ENCODE measurements at regions of chr1 and their contacts with region 1.

Region 1: DNA sequence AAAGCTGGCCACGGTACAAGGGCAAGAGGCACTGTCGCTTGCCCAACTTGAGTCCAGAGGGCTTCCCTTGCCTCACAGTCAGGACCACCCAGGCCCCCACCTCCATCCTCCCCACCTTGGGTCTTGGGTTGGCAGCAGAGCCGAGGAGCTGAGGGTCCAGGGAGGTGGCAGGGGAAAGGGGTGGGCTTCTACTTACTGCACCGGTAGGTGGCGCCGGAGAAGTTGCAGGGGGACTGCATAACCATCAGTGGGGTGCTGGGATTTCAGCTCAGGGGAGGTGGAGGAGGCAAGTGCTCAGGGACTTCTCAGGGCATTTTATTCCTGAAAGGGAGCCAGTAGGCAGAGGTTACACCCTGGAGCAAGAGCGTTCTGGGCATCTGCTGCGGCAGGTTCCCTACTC is 44.0 kb downstream of the TRIM62 start:
- DNase-seq: peak in 4 of 7 donors; percentile 28 to 36 (median 32)
- H3K4me3 ChIP-seq: no peak overlapping the region
- H3K27ac ChIP-seq: peak overlapping the region in 1 of 5 donors; percentile 5
- H3K4me1 ChIP-seq: peaks cover 0 to 3% of the 10 kb centered on the region in 2 donors
- H3K27me3 ChIP-seq: no peaks in the 10 kb centered on the region
- CTCF ChIP-seq: peak in 4 of 6 experiments; percentile 10 to 49 (median 30)
- POLR2A ChIP-seq: no peak

Region 2: GRCh38 chr1:33094971-33095604 is 42.7 kb before region 1 on chr1:
- intact Hi-C with region 1: no loop called
- DNase-seq: peak in 6 of 7 donors; percentile 51 to 82 (median 64)
- H3K4me3 ChIP-seq: no peak overlapping the region
- H3K27ac ChIP-seq: no peak overlapping the region
- H3K4me1 ChIP-seq: peaks cover 6 to 14% of the 10 kb centered on the region in 2 donors
- H3K27me3 ChIP-seq: no peaks in the 10 kb centered on the region
- CTCF ChIP-seq: peak; percentile 84 to 99 (median 88)
- POLR2A ChIP-seq: no peak

Region 3: DNA sequence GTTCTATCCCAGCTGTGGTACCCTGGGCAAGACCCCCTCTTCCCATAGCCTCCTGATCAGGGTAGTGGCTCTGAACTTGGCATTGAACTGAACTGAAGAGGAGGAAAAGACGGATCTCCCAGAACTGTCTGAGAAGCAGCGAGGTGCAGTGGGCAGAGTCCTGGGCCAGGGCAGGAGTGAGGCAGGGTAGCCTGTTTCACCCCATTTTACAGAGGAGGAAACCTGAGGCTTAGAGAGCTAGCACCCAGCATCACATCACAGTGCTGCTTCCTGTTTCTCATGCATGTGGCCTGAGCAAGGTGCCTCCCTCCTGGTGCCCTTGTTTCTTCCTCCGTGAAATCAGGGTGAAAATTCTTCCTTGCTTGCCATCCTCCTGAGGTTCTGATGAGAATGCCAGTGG is 135.6 kb after region 1 on chr1:
- intact Hi-C with region 1: loop called in 1 of 2 experiments (anchors 10 kb)
- DNase-seq: no peak
- H3K4me3 ChIP-seq: no peak overlapping the region
- H3K27ac ChIP-seq: no peak overlapping the region
- H3K4me1 ChIP-seq: peaks cover under 1 to 5% of the 10 kb centered on the region in 2 donors
- H3K27me3 ChIP-seq: no peaks in the 10 kb centered on the region
- CTCF ChIP-seq: no peak
- POLR2A ChIP-seq: no peak